ENCODE measurements at regions of chr13 and their contacts with region 1.

Region 1: DNA sequence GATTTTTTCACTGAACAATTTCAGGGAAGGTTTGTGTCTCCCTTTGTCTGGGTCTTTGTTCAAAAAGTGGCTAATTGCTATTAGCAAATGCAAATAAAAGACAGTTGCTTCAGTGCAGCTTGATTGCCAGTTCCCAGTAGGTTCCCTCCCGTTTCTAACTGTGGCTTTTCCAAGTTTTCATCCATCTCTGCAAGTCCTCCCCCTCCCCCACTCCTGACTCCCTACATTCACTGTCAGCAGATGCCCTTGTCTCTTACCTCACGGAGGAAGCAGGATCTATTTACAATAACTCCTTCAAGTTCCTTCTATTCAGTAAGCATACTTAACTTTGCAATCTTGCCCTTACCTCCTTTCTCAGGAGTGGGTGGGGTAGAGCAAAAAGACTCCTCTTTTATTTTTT is 55.4 kb upstream of the SCEL start:
- DNase-seq: no peak
- H3K4me3 ChIP-seq: no peak overlapping the region
- H3K27ac ChIP-seq: no peak overlapping the region
- H3K27me3 ChIP-seq: peaks cover 3% of the 10 kb centered on the region
- CTCF ChIP-seq: no peak

Region 2: DNA sequence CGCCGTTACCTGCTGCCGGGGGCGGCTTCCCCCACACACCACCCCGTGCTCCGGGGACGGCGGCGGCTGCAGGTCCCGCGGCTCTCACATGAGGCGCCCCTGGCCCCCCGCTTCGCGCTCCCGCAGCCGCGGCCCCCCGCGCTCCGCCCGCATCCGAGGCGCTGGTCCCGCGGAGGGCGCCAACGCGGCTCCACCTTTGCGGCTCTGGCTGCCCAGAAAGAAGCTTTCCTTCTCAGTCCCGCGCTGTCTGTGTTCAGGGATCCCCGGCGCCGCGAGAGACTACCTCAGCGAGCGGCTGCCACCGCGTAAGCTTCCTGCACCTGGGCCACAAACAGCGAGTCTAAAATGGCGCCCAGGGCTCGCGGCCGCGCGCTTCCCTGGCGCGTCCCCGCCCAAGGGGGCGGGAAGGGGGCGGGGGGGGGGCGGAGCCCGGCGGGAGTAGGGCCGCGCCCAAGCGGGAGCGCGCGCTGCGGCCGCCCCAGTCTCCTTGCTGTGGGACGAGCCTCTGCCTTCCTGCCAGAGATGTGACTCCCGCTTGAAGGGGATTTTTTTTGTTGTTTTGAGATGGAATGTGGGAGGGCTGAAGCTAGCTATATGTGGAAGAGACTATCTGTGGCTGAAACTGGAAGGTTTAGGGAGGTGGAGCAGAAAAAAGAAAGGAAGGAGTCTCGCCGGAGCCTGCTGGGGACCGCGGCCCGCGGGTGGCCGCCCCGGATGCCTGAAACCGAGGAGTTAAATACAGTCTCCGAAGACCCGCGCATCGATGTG is 453.1 kb before region 1 on chr13 and contains the start of gene FBXL3:
- CTCF ChIA-PET with region 1: interaction called, 14 read pairs
- POLR2A ChIA-PET with region 1: no interaction called
- DNase-seq: peak; percentile 81
- H3K4me3 ChIP-seq: peak within 1 kb of the TSS; percentile 88
- H3K27ac ChIP-seq: peak within 1 kb of the TSS; percentile 71
- H3K27me3 ChIP-seq: no peaks in the 10 kb centered on the region
- CTCF ChIP-seq: no peak
- polyA plus RNA-seq, gene FBXL3: 29.0 and 38.0 TPM in 2 replicates

Region 3: GRCh38 chr13:77136902-77137420 is 343.1 kb before region 1 on chr13:
- CTCF ChIA-PET with region 1: interaction called, 10 read pairs
- POLR2A ChIA-PET with region 1: no interaction called
- DNase-seq: peak; percentile 82
- H3K4me3 ChIP-seq: no peak overlapping the region
- H3K27ac ChIP-seq: no peak overlapping the region
- H3K27me3 ChIP-seq: no peaks in the 10 kb centered on the region
- CTCF ChIP-seq: no peak

Region 4: GRCh38 chr13:77329133-77329910 is 150.7 kb before region 1 on chr13:
- CTCF ChIA-PET with region 1: interaction called, 14 read pairs
- POLR2A ChIA-PET with region 1: no interaction called
- DNase-seq: peak; percentile 89
- H3K4me3 ChIP-seq: peak overlapping the region; percentile 87
- H3K27ac ChIP-seq: peak overlapping the region; percentile 58
- H3K27me3 ChIP-seq: no peaks in the 10 kb centered on the region
- CTCF ChIP-seq: no peak

Region 5: DNA sequence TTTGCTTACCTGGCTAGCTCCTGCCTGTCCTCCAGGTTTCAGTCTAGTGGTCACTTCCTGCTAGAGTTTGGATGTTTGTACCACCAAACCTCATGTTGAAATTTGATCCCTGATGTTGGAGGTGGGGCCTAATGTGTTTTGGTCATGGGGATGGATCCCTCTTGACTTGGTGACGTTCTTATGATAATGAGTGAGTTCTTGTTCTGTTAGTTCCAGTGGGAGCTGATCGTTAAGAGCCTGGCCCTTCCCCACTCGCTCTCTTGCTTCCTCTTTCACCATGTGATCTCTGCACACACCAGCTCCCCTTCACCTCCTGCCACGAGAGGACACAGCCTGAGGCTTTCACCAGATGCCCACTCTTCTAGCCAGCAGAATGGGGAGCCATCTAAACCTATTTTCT is 31.4 kb before region 1 on chr13:
- CTCF ChIA-PET with region 1: interaction called, 14 read pairs
- POLR2A ChIA-PET with region 1: no interaction called
- DNase-seq: no peak
- H3K4me3 ChIP-seq: no peak overlapping the region
- H3K27ac ChIP-seq: no peak overlapping the region
- H3K27me3 ChIP-seq: no peaks in the 10 kb centered on the region
- CTCF ChIP-seq: no peak

Region 6: DNA sequence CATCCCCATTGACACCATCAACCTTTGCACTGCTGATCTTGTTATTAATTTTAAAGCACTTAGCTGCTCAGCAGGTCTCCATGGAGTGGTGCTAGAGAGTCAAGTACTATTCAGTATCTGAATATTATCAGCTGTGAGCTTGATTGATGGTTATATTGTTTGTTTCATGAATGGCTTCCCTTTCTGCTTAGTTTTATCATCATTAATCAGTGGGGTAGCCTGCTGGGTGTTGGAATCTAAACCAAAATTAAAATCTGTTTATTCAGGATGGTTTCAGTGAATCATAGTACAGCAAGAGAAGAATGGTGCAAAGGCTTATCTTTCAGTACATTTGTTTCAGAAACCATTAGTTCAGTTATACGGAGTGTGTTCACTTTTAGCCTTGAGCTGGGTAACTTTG is 12.9 kb after region 1 on chr13:
- CTCF ChIA-PET with region 1: interaction called, 12 read pairs
- POLR2A ChIA-PET with region 1: no interaction called
- DNase-seq: no peak
- H3K4me3 ChIP-seq: no peak overlapping the region
- H3K27ac ChIP-seq: no peak overlapping the region
- H3K27me3 ChIP-seq: no peaks in the 10 kb centered on the region
- CTCF ChIP-seq: 0 out of 2 replicates have a peak, but pooled peaks have one; percentile 11

Region 7: GRCh38 chr13:77548095-77548494 is 68.0 kb after region 1 on chr13:
- CTCF ChIA-PET with region 1: interaction called, 18 read pairs
- POLR2A ChIA-PET with region 1: no interaction called
- DNase-seq: no peak
- H3K4me3 ChIP-seq: no peak overlapping the region
- H3K27ac ChIP-seq: no peak overlapping the region
- H3K27me3 ChIP-seq: no peaks in the 10 kb centered on the region
- CTCF ChIP-seq: no peak

Measured in AG04450 (cell line).